G401 (cell line): ENCODE measurements at regions of chr16 and their contacts with region 1.

Region 1: GRCh38 chr16:30115238-30115637 is 1.9 kb upstream of the GDPD3 start:
- DNase-seq: no peak

Region 2: DNA sequence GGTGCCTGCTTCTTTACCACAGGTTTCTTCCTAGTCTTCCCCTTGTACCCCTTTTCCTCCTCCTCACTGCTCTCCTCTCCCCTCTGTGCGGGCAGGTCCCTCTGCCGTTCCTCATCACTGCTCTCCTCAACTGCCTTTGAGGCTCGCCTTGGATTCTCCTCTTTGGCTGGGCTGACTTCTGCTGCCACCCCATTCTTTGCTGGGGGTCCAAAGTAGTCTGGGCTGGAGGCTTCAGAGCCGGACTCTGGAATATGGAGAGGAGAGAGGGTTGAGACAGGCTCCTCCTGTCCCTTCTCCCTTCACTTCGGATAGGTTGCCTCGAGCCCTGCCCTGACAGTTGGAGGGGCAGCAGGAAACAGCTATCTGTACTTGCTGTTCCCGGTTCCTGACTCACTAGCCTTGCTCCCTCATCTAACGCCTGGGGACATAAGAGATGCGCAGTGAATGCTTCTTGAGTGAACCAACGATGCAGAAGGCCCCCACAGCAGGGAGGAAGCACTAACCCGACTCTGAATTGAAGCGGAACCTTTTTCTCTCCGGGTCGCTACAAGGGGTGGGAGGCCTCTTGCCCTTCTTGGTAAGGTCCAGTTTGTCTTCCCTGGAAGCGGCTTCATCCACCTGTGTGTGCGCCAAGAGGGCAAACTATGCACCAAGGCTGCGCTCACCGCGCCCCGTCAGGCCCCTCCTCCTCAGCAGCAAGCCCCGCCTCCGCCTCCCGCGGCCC is 120.5 kb before region 1 on chr16:
- in situ Hi-C with region 1: no loop called
- DNase-seq: no peak

Region 3: DNA sequence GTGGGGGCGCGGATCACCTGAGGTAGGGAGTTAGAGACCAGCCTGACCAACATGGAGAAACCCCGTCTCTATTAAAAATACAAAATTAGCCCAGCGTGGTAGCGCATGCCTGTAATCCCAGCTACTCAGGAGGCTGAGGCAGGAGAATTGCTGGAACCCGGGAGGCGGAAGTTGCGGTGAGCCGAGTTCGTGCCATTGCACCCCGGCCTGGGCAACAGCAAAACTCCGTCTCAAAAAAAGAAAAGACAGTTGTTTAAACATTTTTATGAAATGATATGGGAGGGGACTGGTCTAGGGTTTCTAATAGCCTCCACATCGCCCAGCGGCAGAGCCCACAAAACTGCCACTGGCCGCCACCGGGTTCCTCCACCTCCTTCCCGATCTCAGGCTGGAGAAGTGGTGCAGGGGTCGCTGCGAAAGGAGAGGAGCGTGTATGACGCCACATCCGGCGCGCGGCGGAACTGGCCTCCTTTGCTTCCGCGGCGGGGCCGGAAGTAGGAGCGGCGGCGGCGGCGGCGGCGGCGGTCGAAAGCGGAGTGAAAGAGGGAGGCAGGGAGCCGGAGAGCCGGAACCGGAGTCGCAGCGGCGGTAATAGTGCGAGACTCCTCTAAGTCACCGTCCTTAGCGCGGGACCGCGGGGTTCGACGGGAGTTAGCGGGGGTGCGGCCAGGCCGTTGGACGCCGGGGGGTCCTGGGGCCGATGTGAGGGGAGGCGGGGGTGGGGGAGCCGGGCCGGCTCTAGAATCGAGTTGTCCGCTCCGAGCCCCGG is 39.5 kb before region 1 on chr16 and contains the start of gene PPP4C:
- in situ Hi-C with region 1: loop called (anchors 5 kb)
- DNase-seq: peak; percentile 89
- total RNA-seq, gene PPP4C: 225 and 232 TPM in 2 replicates